ENCODE measurements at regions of chr11 and their contacts with region 1.

Region 1: GRCh38 chr11:119095066-119095880 is 6.4 kb downstream of the DPAGT1 start:
- DNase-seq: peak; percentile 99
- ATAC-seq: peak; percentile 77
- H3K4me3 ChIP-seq: peak overlapping the region; percentile 78 to 93 (median 91)
- H3K27ac ChIP-seq: peak overlapping the region; percentile 78
- H3K4me1 ChIP-seq: peaks cover 38% of the 10 kb centered on the region
- H3K27me3 ChIP-seq: no peaks in the 10 kb centered on the region
- CTCF ChIP-seq: peak; percentile 44
- EP300 ChIP-seq: peak in 1 of 2 experiments; percentile 47; a peak in 2 of 4 replicates
- POLR2A ChIP-seq: peak; percentile 100
- RAD21 ChIP-seq: peak; percentile 57; the same call in 1 of the 2 replicates

Region 2: DNA sequence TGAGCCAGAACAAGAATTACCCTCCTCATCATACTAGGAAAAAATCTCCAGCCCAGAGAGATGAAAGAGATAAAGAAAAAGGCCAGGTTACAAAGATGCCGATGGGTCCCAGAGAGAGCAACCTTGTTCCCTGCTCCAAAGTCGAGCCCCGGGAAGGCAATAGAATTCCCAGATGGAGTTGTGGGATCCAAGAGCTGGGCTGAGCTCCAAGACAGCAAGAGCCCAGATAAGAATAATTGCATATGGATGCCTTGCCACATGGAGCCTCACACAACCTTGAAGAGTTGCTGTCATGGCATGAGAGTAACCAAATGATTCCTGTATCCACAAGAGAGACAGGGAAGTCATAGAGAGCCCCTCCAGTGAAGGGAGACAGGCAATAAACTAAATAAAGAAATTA is 1078.2 kb before region 1 on chr11:
- CTCF ChIA-PET with region 1: no interaction called
- POLR2A ChIA-PET with region 1: no interaction called
- in situ Hi-C with region 1: no loop called
- intact Hi-C with region 1: no loop called
- DNase-seq: no peak
- ATAC-seq: no peak
- H3K4me3 ChIP-seq: no peak overlapping the region
- H3K27ac ChIP-seq: no peak overlapping the region
- H3K4me1 ChIP-seq: no peaks in the 10 kb centered on the region
- H3K27me3 ChIP-seq: peaks cover 2 to 20% of the 10 kb centered on the region in 2 experiments; a peak in 2 of 5 replicates
- CTCF ChIP-seq: no peak
- EP300 ChIP-seq: no peak
- POLR2A ChIP-seq: no peak
- RAD21 ChIP-seq: no peak

Region 3: DNA sequence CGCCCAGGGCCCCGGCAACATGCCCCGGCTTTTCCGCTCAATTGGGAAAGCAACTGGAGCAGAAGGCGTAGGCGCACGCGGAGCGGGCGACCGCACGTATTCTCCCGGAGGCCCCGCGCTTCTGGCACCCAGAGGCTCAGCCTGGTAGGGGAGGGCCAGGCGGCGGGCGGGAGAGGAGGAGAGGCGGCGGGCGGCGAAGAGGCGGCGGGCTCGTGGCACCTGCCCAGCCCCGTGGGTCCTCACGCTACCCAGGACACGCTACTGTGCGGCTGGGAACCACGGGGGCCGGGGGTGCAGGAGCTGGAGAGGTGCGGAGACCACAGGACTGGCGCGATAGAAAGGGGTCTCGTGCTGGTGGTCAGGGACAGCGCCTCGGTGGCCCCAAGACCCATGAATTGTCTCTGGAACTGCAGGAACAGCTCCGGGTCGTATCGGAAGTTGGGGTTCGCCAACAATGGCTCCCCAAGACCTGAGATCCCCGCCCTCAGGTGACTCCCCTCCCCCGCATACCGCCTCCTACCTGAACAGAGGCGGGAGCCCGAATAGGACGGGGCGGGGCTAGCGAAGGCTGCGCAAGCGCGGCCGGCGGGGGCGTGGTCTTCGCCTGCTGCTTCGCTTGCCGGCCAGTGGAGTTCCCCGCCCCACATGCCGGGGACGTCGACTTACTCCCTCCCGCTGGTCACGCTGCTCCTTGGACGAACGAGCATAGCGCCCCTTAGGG is 64.8 kb before region 1 on chr11 and contains the start of gene SLC37A4:
- CTCF ChIA-PET with region 1: no interaction called
- POLR2A ChIA-PET with region 1: interaction called, 3 read pairs
- in situ Hi-C with region 1: no loop called
- intact Hi-C with region 1: loop called (anchors 2 kb)
- DNase-seq: peak; percentile 95
- ATAC-seq: peak; percentile 63
- H3K4me3 ChIP-seq: peak within 1 kb of the TSS; percentile 74 to 82 (median 79)
- H3K27ac ChIP-seq: peak within 1 kb of the TSS; percentile 77
- H3K4me1 ChIP-seq: peaks cover 67% of the 10 kb centered on the region
- H3K27me3 ChIP-seq: no peaks in the 10 kb centered on the region; a peak in 1 of 5 replicates
- CTCF ChIP-seq: peak; percentile 97
- EP300 ChIP-seq: no peak
- POLR2A ChIP-seq: peak; percentile 14 to 83; a peak in 2 of 4 replicates
- RAD21 ChIP-seq: peak; percentile 82
- total RNA-seq, gene SLC37A4: 25.6 and 43.0 TPM in 2 replicates

Region 4: GRCh38 chr11:119067371-119068222 is 27.7 kb before region 1 on chr11 and contains the start of gene VPS11:
- CTCF ChIA-PET with region 1: interaction called, 3 read pairs
- POLR2A ChIA-PET with region 1: interaction called, 35 read pairs
- in situ Hi-C with region 1: no loop called
- intact Hi-C with region 1: loop called (anchors 2 kb)
- DNase-seq: peak; percentile 92
- ATAC-seq: peak; percentile 98
- H3K4me3 ChIP-seq: peak within 1 kb of the TSS; percentile 97 to 98 (median 97)
- H3K27ac ChIP-seq: peak within 1 kb of the TSS; percentile 83
- H3K4me1 ChIP-seq: peaks cover 25% of the 10 kb centered on the region
- H3K27me3 ChIP-seq: no peaks in the 10 kb centered on the region; a peak in 1 of 5 replicates
- CTCF ChIP-seq: peak; percentile 12; the same call in 1 of the 2 replicates
- EP300 ChIP-seq: peak in 1 of 2 experiments; percentile 20; a peak in 1 of 4 replicates
- POLR2A ChIP-seq: peak; percentile 70 to 82
- RAD21 ChIP-seq: no peak
- total RNA-seq, gene VPS11: 21.6 and 23.3 TPM in 2 replicates

Region 5: GRCh38 chr11:119108146-119108856 is 13.0 kb after region 1 on chr11:
- CTCF ChIA-PET with region 1: no interaction called
- POLR2A ChIA-PET with region 1: interaction called, 24 read pairs
- in situ Hi-C with region 1: no loop called
- intact Hi-C with region 1: no loop called
- DNase-seq: peak; percentile 73
- ATAC-seq: peak; percentile 76
- H3K4me3 ChIP-seq: peak overlapping the region; percentile 68 to 86 (median 85)
- H3K27ac ChIP-seq: peak overlapping the region; percentile 65
- H3K4me1 ChIP-seq: peaks cover 33% of the 10 kb centered on the region
- H3K27me3 ChIP-seq: no peaks in the 10 kb centered on the region; a peak in 1 of 5 replicates
- CTCF ChIP-seq: no peak
- EP300 ChIP-seq: no peak
- POLR2A ChIP-seq: peak; percentile 20 to 48; a peak in 2 of 4 replicates
- RAD21 ChIP-seq: no peak

Region 6: GRCh38 chr11:119144825-119145486 is 49.7 kb after region 1 on chr11:
- CTCF ChIA-PET with region 1: no interaction called
- POLR2A ChIA-PET with region 1: interaction called, 5 read pairs
- in situ Hi-C with region 1: no loop called
- intact Hi-C with region 1: loop called (anchors 2 kb)
- DNase-seq: peak; percentile 77
- ATAC-seq: peak; percentile 90
- H3K4me3 ChIP-seq: no peak overlapping the region
- H3K27ac ChIP-seq: no peak overlapping the region
- H3K4me1 ChIP-seq: peaks cover 6% of the 10 kb centered on the region; the same call in 1 of the 2 replicates
- H3K27me3 ChIP-seq: peaks cover 10 to 33% of the 10 kb centered on the region in 2 experiments
- CTCF ChIP-seq: peak; percentile 75
- EP300 ChIP-seq: no peak
- POLR2A ChIP-seq: no peak
- RAD21 ChIP-seq: 0 out of 2 replicates have a peak, but pooled peaks have one; percentile 22

Region 7: GRCh38 chr11:119205574-119206510 is 110.6 kb after region 1 on chr11 and contains the start of gene CBL:
- CTCF ChIA-PET with region 1: no interaction called
- POLR2A ChIA-PET with region 1: no interaction called
- in situ Hi-C with region 1: no loop called
- intact Hi-C with region 1: no loop called
- DNase-seq: peak; percentile 80
- ATAC-seq: peak; percentile 94
- H3K4me3 ChIP-seq: peak within 1 kb of the TSS; percentile 89 to 99 (median 96)
- H3K27ac ChIP-seq: peak within 1 kb of the TSS; percentile 76
- H3K4me1 ChIP-seq: peaks cover 32% of the 10 kb centered on the region
- H3K27me3 ChIP-seq: no peaks in the 10 kb centered on the region; a peak in 1 of 5 replicates
- CTCF ChIP-seq: peak; percentile 86
- EP300 ChIP-seq: no peak
- POLR2A ChIP-seq: peak in 1 of 2 experiments; percentile 53; a peak in 1 of 4 replicates
- RAD21 ChIP-seq: peak; percentile 31; the same call in 1 of the 2 replicates
- total RNA-seq, gene CBL: 7.4 and 11.0 TPM in 2 replicates

Region 8: DNA sequence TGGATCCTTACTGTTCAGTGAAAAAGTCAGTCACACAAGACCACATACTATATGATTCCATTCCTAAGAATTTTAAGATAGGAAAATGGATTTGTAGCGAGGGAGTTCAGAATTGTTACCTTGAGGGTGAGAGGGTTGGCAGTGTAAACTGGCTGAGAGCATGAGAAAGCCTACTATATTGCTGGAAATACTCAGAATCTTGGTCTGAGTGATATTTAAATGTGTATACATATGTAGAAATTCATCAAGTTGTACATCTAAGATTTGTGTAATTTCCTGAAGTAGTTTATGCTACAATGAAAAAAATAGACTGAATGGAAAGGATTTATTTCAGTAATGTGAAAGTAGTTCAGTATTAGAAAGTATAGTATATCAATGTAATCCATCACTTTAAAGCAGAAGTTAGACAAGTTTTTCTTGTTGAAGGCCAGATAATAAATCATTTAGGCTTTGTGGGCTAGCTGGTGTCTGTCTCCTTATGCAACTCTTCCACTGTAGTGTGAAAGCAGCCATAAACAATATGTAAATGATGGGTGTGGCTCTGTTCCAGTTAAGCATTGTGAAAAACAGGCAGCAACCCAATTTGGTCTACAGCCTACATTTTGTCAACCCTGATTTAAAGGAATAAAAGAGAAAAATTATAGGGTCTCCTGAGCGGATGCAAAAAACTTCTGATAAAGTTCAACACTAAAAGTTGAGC is 454.9 kb after region 1 on chr11:
- CTCF ChIA-PET with region 1: no interaction called
- POLR2A ChIA-PET with region 1: no interaction called
- in situ Hi-C with region 1: no loop called
- intact Hi-C with region 1: no loop called
- DNase-seq: no peak
- ATAC-seq: no peak
- H3K4me3 ChIP-seq: no peak overlapping the region
- H3K27ac ChIP-seq: no peak overlapping the region
- H3K4me1 ChIP-seq: no peaks in the 10 kb centered on the region
- H3K27me3 ChIP-seq: no peaks in the 10 kb centered on the region; a peak in 2 of 5 replicates
- CTCF ChIP-seq: no peak
- EP300 ChIP-seq: no peak
- POLR2A ChIP-seq: no peak
- RAD21 ChIP-seq: no peak

Measured in HepG2 (cell line).